Activated naive CD4-positive, alpha-beta T cell treated with anti-CD3 and anti-CD28 coated beads for 36 hours (primary cell): ENCODE measurements at regions of chr1 and their contacts with region 1.

Region 1: DNA sequence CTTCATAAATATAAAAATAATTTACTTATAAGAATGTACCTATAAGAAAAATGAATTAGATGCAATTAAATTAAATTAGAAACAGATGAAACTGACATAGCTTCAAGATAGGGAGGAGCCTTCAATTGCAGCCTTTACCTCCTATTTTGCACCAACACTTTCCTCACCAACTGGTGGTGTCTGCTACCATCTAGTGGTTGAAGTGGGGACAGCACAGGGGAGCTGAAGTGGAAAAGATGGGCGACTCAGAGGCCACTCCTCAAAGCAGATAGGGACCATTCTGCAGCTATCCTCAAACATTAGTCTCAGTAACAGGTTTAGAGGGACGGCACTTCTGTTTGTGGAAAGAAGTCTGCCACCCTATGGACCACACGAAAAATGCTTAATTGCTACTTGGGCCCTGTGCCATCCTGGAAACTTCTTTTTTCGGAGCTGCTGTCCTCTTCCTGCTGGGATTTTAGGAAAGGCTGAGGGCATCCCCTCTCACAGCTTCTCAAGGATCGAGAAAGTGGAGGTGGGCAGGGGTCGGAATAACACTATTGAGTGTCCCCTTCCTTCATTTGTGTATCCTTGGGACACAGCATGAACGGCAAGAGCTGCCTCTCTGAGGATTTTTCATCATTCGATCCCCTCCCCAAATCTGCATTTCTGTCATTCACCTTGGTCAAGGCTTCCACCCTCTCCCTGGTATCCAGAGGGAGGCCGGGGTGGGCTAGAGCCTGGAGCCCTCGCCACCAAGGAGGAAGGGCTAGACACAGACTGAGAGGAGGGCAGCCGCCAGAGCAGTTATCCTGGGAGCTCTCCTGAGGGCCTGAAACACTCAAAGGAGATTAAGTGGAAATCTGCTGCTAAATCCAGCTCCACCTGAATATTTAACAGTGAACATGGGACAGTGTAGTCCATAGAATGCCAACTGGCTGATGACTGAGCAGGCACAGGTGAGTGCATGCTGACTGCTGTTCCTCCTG is 9.6 kb downstream of the PROK1 start:
- DNase-seq: peak; percentile 93
- H3K4me3 Mint-ChIP-seq: no peak overlapping the region
- H3K27ac Mint-ChIP-seq: no peak overlapping the region
- H3K4me1 Mint-ChIP-seq: no peaks in the 10 kb centered on the region
- H3K27me3 Mint-ChIP-seq: no peaks in the 10 kb centered on the region

Region 2: GRCh38 chr1:110003747-110004630 is 456.5 kb before region 1 on chr1:
- CTCF ChIA-PET with region 1: no interaction called
- intact Hi-C with region 1: no loop called
- DNase-seq: peak; percentile 80
- H3K4me3 Mint-ChIP-seq: peak overlapping the region; percentile 23
- H3K27ac Mint-ChIP-seq: peak overlapping the region; percentile 83
- H3K4me1 Mint-ChIP-seq: peaks cover 21% of the 10 kb centered on the region
- H3K27me3 Mint-ChIP-seq: no peaks in the 10 kb centered on the region

Region 3: DNA sequence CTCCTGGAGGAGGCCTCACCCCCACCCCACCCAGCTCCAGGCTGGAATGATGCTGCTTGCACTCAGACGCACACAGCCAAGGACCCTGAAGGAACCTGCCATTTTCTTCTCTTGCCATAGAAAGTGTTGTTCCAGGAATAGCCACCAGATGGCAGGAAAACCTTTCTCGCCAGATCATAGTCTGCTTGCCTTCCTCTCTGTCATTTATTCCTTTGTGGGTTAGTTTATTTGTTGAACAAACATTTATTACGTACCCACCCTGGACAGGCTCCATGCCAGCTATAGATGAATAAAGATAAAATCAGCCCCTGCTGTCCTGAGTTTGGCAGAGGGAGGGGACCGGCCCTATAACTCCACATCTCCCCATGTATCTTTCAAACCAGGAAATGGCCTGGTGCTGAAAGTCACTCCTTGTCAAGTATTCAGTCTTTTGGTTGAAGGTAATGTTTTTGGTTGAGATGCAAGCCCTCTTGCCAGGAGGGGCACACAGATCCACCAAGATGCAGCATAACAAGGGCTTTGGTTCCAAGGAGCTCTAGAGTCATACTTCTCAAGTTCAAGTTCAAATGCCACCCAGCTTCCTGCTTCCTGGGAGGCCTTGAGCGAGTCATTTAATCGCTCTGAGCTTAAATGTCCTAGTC is 257.4 kb before region 1 on chr1:
- CTCF ChIA-PET with region 1: interaction called, 123 read pairs
- intact Hi-C with region 1: loop called (anchors 5 kb)
- DNase-seq: peak; percentile 88
- H3K4me3 Mint-ChIP-seq: no peak overlapping the region
- H3K27ac Mint-ChIP-seq: peak overlapping the region; percentile 81
- H3K4me1 Mint-ChIP-seq: peaks cover 21% of the 10 kb centered on the region
- H3K27me3 Mint-ChIP-seq: no peaks in the 10 kb centered on the region

Region 4: DNA sequence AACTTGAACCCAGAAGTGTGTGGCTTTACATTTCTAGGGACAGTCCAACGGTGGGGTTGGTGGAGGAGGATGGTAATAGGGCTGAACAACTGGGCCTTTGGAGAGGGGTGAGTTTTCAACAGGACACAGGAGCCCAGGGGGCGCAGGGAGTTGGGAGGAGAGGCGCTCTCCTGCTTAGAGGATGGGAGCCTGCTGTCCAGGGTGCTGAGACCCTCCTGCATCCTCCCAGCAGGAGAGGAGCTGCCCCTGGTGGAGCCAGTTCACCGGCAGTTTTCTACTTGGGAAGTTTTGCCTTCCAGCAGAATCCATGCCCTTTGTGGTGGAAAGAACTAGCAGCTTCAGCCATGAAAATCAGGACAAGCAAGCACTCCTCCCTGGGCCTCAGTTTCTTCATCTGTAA is 241.8 kb before region 1 on chr1:
- CTCF ChIA-PET with region 1: no interaction called
- intact Hi-C with region 1: no loop called
- DNase-seq: no peak
- H3K4me3 Mint-ChIP-seq: no peak overlapping the region
- H3K27ac Mint-ChIP-seq: no peak overlapping the region
- H3K4me1 Mint-ChIP-seq: peaks cover 27% of the 10 kb centered on the region
- H3K27me3 Mint-ChIP-seq: no peaks in the 10 kb centered on the region

Region 5: GRCh38 chr1:110407260-110408210 is 53.0 kb before region 1 on chr1 and contains the start of gene LAMTOR5:
- CTCF ChIA-PET with region 1: interaction called, 51 read pairs
- intact Hi-C with region 1: loop called (anchors 5 kb)
- DNase-seq: peak; percentile 96
- H3K4me3 Mint-ChIP-seq: peak within 1 kb of the TSS; percentile 99
- H3K27ac Mint-ChIP-seq: peak within 1 kb of the TSS; percentile 96
- H3K4me1 Mint-ChIP-seq: peaks cover 15% of the 10 kb centered on the region
- H3K27me3 Mint-ChIP-seq: no peaks in the 10 kb centered on the region
- total RNA-seq, gene LAMTOR5: 138 to 144 TPM

Region 6: DNA sequence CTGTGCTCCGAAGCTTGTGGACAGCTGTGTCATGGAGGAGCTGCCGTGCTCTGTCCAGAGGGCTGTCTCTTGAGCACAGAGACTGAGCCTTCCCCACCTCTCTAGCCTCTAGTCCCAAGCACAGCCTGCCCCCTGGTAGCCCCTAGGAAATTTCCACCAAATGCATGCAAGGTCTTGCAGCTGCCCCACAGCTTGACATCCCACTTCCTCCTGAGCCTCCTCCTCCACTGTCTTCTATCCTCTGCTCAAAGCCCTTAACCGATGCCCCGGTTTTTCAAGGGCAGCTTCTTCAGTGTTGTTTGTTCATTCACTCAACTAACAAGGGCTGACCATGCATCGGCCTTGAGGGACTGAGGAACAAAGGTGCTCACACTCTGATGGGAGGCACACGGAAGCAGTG is 30.2 kb before region 1 on chr1:
- CTCF ChIA-PET with region 1: interaction called, 11 read pairs
- intact Hi-C with region 1: no loop called
- DNase-seq: no peak
- H3K4me3 Mint-ChIP-seq: no peak overlapping the region
- H3K27ac Mint-ChIP-seq: no peak overlapping the region
- H3K4me1 Mint-ChIP-seq: no peaks in the 10 kb centered on the region
- H3K27me3 Mint-ChIP-seq: peaks cover 4% of the 10 kb centered on the region

Region 7: GRCh38 chr1:110490791-110491451 is 30.4 kb after region 1 on chr1:
- CTCF ChIA-PET with region 1: interaction called, 76 read pairs
- intact Hi-C with region 1: loop called (anchors 2 kb)
- DNase-seq: no peak
- H3K4me3 Mint-ChIP-seq: no peak overlapping the region
- H3K27ac Mint-ChIP-seq: no peak overlapping the region
- H3K4me1 Mint-ChIP-seq: no peaks in the 10 kb centered on the region
- H3K27me3 Mint-ChIP-seq: no peaks in the 10 kb centered on the region

Region 8: GRCh38 chr1:110676974-110677373 is 216.4 kb after region 1 on chr1:
- CTCF ChIA-PET with region 1: no interaction called
- intact Hi-C with region 1: no loop called
- DNase-seq: no peak
- H3K4me3 Mint-ChIP-seq: no peak overlapping the region
- H3K27ac Mint-ChIP-seq: no peak overlapping the region
- H3K4me1 Mint-ChIP-seq: peaks cover 13% of the 10 kb centered on the region
- H3K27me3 Mint-ChIP-seq: no peaks in the 10 kb centered on the region